ENCODE measurements at regions of chr14 and their contacts with region 1.

Region 1: DNA sequence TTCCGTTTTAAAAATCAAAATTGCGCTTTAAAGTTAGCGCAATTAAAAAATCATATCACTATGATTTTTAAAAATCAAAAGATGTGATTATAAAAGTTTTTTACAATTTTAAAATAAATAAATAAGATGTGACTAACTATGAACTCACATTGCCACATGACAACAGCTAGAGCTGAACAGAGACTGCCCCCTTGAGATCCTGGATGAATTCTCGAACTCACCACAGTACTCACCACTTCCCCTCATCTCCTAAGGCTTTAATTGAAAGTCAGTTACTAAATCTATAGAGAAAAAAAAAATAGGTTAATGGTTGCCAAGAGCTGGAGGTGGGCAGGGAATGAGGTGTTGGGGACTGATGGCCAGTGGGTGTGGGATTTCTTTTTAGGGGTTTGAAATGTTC is 384.2 kb downstream of the ZFP36L1 start:
- DNase-seq: no peak
- ATAC-seq: peak; percentile 42
- H3K4me3 ChIP-seq: no peak overlapping the region
- H3K27ac ChIP-seq: no peak overlapping the region
- H3K4me1 ChIP-seq: peaks cover 39% of the 10 kb centered on the region
- H3K27me3 ChIP-seq: no peaks in the 10 kb centered on the region
- CTCF ChIP-seq: peak; percentile 25 to 54 (median 33); a peak in 5 of 6 replicates
- EP300 ChIP-seq: no peak
- POLR2A ChIP-seq: no peak
- RAD21 ChIP-seq: peak; percentile 67

Region 2: DNA sequence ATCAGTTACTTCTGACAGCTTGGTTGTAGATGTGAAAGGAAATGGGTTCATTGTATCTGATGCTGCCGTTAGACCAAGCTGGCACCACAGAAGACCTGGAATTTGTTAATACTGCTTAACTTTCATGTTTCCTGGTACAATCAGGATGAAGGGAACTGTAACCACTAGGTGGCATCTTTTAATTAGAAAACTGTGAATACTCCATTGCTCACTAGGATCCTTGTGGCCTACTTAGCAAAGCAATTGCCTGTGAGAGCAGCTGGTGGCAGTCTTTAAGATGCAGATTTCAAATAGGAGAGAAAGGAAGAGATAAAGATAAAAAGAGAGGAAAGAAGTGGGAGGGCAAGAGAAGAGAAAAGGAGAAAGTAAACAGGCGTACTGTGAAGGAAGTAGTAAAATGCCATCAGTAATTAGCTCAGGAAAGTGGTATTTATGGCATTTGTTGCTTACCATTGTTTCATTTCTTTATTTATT is 474.6 kb before region 1 on chr14:
- CTCF ChIA-PET with region 1: no interaction called
- POLR2A ChIA-PET with region 1: no interaction called
- RAD21 ChIA-PET with region 1: no interaction called
- SMC1A ChIA-PET with region 1: no interaction called
- in situ Hi-C with region 1: no loop called
- intact Hi-C with region 1: no loop called
- DNase-seq: peak; percentile 42
- ATAC-seq: peak; percentile 98
- H3K4me3 ChIP-seq: no peak overlapping the region
- H3K27ac ChIP-seq: no peak overlapping the region
- H3K4me1 ChIP-seq: no peaks in the 10 kb centered on the region
- H3K27me3 ChIP-seq: no peaks in the 10 kb centered on the region
- CTCF ChIP-seq: peak; percentile 46 to 65 (median 62)
- EP300 ChIP-seq: no peak
- POLR2A ChIP-seq: no peak
- RAD21 ChIP-seq: peak; percentile 76

Region 3: GRCh38 chr14:68208218-68208617 is 200.5 kb before region 1 on chr14:
- CTCF ChIA-PET with region 1: no interaction called
- POLR2A ChIA-PET with region 1: no interaction called
- RAD21 ChIA-PET with region 1: no interaction called
- SMC1A ChIA-PET with region 1: no interaction called
- in situ Hi-C with region 1: no loop called
- intact Hi-C with region 1: no loop called
- DNase-seq: no peak
- ATAC-seq: no peak
- H3K4me3 ChIP-seq: no peak overlapping the region
- H3K27ac ChIP-seq: no peak overlapping the region
- H3K4me1 ChIP-seq: peaks cover 43% of the 10 kb centered on the region
- H3K27me3 ChIP-seq: no peaks in the 10 kb centered on the region
- CTCF ChIP-seq: no peak
- EP300 ChIP-seq: no peak
- POLR2A ChIP-seq: no peak
- RAD21 ChIP-seq: no peak

Region 4: DNA sequence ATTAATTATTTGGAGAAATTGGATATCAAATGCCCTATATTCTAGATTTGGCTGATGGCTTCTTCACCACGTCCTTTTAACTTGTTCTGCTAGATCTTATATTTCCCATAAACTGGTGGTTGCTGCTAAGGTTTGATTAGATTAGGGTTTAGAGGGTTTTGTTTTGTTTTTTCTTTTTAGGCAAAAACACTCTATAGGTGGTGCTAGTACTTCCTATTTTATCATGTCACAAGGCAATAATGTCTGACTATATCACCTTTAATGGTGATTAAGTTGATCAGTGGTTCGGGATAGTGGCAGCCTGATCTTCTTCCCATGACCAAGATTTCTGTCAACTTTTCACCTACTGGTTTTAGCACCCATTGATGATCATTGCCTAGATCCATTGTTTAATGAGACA is 134.0 kb before region 1 on chr14:
- CTCF ChIA-PET with region 1: interaction called, 8 read pairs
- POLR2A ChIA-PET with region 1: interaction called, 15 read pairs
- RAD21 ChIA-PET with region 1: interaction called, 34 read pairs
- SMC1A ChIA-PET with region 1: interaction called, 227 read pairs
- in situ Hi-C with region 1: no loop called
- intact Hi-C with region 1: loop called (anchors 5 kb)
- DNase-seq: no peak
- ATAC-seq: no peak
- H3K4me3 ChIP-seq: no peak overlapping the region
- H3K27ac ChIP-seq: peak overlapping the region; percentile 91
- H3K4me1 ChIP-seq: peaks cover 78% of the 10 kb centered on the region
- H3K27me3 ChIP-seq: no peaks in the 10 kb centered on the region
- CTCF ChIP-seq: peak in 1 of 3 experiments; percentile 22; a peak in 1 of 6 replicates
- EP300 ChIP-seq: no peak
- POLR2A ChIP-seq: no peak
- RAD21 ChIP-seq: 0 out of 2 replicates have a peak, but pooled peaks have one; percentile 21

Region 5: GRCh38 chr14:68476212-68476907 is 67.7 kb after region 1 on chr14:
- CTCF ChIA-PET with region 1: interaction called, 6 read pairs
- POLR2A ChIA-PET with region 1: interaction called, 7 read pairs
- RAD21 ChIA-PET with region 1: interaction called, 18 read pairs
- SMC1A ChIA-PET with region 1: interaction called, 20 read pairs
- in situ Hi-C with region 1: no loop called
- intact Hi-C with region 1: loop called (anchors 2 kb)
- DNase-seq: peak; percentile 93
- ATAC-seq: peak; percentile 96
- H3K4me3 ChIP-seq: no peak overlapping the region
- H3K27ac ChIP-seq: peak overlapping the region; percentile 88
- H3K4me1 ChIP-seq: peaks cover 27% of the 10 kb centered on the region
- H3K27me3 ChIP-seq: no peaks in the 10 kb centered on the region
- CTCF ChIP-seq: no peak
- EP300 ChIP-seq: peak; percentile 70 to 97; a peak in 3 of 4 replicates
- POLR2A ChIP-seq: no peak; the same call in 1 of the 2 replicates
- RAD21 ChIP-seq: peak; percentile 30; the same call in 1 of the 2 replicates

Region 6: GRCh38 chr14:68495101-68496039 is 86.7 kb after region 1 on chr14:
- CTCF ChIA-PET with region 1: interaction called, 4 read pairs
- POLR2A ChIA-PET with region 1: interaction called, 3 read pairs
- RAD21 ChIA-PET with region 1: interaction called, 12 read pairs
- SMC1A ChIA-PET with region 1: interaction called, 6 read pairs
- in situ Hi-C with region 1: no loop called
- intact Hi-C with region 1: no loop called
- DNase-seq: peak; percentile 83
- ATAC-seq: peak; percentile 92
- H3K4me3 ChIP-seq: no peak overlapping the region
- H3K27ac ChIP-seq: peak overlapping the region; percentile 68
- H3K4me1 ChIP-seq: peaks cover 24% of the 10 kb centered on the region
- H3K27me3 ChIP-seq: no peaks in the 10 kb centered on the region
- CTCF ChIP-seq: no peak
- EP300 ChIP-seq: peak; percentile 71 to 87; a peak in 2 of 4 replicates
- POLR2A ChIP-seq: no peak
- RAD21 ChIP-seq: 0 out of 2 replicates have a peak, but pooled peaks have one; percentile 8

Region 7: GRCh38 chr14:68576496-68577235 is 168.0 kb after region 1 on chr14:
- CTCF ChIA-PET with region 1: no interaction called
- POLR2A ChIA-PET with region 1: no interaction called
- RAD21 ChIA-PET with region 1: no interaction called
- SMC1A ChIA-PET with region 1: no interaction called
- in situ Hi-C with region 1: no loop called
- intact Hi-C with region 1: no loop called
- DNase-seq: no peak
- ATAC-seq: no peak
- H3K4me3 ChIP-seq: no peak overlapping the region
- H3K27ac ChIP-seq: no peak overlapping the region
- H3K4me1 ChIP-seq: no peaks in the 10 kb centered on the region
- H3K27me3 ChIP-seq: no peaks in the 10 kb centered on the region
- CTCF ChIP-seq: no peak
- EP300 ChIP-seq: no peak
- POLR2A ChIP-seq: no peak
- RAD21 ChIP-seq: no peak

Region 8: DNA sequence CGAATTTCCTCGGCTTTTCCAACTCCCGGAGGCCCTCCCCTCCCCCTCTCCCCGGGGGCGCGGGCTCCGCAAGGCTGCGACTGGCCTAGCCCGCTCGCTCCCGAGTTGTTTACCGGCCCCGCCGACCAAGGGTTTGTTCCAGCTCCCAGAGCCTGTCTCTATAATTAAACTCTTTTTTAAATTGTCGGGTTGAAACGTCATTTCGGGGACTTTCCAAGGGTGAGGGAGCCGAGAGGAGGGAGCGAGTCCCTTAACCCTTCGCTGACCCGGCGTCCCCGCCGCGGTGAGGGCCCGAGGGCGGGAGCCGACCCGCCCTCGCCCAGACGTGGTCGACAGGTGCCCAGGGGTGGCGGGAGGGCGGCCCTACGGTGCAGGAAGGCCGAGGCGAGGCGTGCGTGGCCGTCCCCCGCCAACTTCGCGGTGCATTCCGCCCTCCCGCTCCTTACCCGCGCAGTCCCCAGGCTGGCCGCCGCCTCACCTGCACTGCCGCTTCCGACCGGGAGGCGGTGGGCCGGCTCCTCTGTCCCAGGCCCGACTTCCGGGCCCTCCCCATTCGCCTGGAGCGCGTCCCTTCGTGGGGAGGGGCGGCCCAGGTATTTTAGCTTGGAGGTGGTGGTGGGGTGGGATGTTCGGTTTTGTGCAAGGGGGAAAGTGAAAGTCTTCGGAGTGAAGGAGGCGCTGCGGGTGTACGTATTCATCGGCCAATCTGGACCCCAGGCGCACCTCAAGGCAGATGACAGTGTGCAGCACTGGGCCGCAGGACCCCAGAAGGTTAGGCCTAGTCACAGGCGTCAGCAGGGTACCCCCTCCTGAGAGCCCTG is 387.1 kb after region 1 on chr14:
- CTCF ChIA-PET with region 1: interaction called, 4 read pairs
- POLR2A ChIA-PET with region 1: interaction called, 23 read pairs
- RAD21 ChIA-PET with region 1: interaction called, 154 read pairs
- SMC1A ChIA-PET with region 1: interaction called, 79 read pairs
- in situ Hi-C with region 1: loop called (anchors 5 kb)
- intact Hi-C with region 1: loop called (anchors 2 kb)
- DNase-seq: no peak
- ATAC-seq: peak; percentile 62
- H3K4me3 ChIP-seq: peak overlapping the region; percentile 97
- H3K27ac ChIP-seq: peak overlapping the region; percentile 100
- H3K4me1 ChIP-seq: peaks cover 18% of the 10 kb centered on the region
- H3K27me3 ChIP-seq: no peaks in the 10 kb centered on the region
- CTCF ChIP-seq: peak; percentile 46 to 74 (median 59); a peak in 5 of 6 replicates
- EP300 ChIP-seq: peak in 1 of 2 experiments; percentile 62; a peak in 3 of 4 replicates
- POLR2A ChIP-seq: peak; percentile 97
- RAD21 ChIP-seq: peak; percentile 43; the same call in 1 of the 2 replicates